Testis (tissue), 5 donors: ENCODE measurements at regions of chr15 and their contacts with region 1.

Region 1: DNA sequence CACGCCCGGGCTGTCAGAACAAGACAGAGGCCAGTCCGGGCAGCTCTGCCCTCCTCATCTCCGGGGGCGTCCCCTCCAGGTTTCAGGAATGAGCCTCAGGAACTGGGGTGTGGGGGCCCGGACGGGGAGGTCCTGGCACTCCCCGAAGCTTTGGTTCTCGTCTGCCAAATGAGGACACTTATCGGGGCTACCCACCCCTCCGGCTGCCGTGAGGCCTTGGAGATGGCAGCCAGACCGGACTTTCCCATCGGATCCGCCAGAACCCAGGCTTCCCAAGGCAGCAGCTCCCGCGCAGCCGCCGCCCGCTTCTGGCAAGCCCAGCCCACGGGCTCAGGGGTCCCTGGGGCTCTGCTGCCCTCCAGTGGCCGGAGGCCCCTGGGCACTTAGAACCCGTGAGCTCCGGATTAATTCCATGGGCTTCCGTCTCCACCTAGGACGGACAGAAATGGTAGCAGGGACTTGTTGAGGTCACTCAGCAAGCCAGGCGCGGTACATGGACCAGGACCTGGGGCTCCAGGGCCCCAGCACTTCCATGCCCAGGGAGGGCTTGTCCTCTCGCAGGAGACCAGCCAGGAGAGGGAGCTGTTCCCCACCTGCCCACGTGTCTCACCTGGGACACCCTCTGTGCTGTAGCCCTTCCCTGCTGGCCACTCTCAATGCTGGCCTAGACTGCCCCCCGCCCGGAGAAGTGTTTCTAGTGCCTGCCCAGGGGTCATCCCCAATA is 89.4 kb downstream of the LINGO1 start:
- DNase-seq: peak; percentile 89
- H3K4me3 ChIP-seq: peak overlapping the region; percentile 10 to 30
- H3K27ac ChIP-seq: peak overlapping the region in 1 of 2 donors; percentile 82
- H3K4me1 ChIP-seq: peaks cover 27% of the 10 kb centered on the region
- H3K27me3 ChIP-seq: no peaks in the 10 kb centered on the region
- CTCF ChIP-seq: peak; percentile 90 to 94 (median 93)
- POLR2A ChIP-seq: no peak

Region 2: GRCh38 chr15:77118882-77119321 is 424.4 kb before region 1 on chr15:
- intact Hi-C with region 1: loop called (anchors 10 kb)
- DNase-seq: peak; percentile 67
- H3K4me3 ChIP-seq: no peak overlapping the region
- H3K27ac ChIP-seq: no peak overlapping the region
- H3K4me1 ChIP-seq: no peaks in the 10 kb centered on the region
- H3K27me3 ChIP-seq: no peaks in the 10 kb centered on the region
- CTCF ChIP-seq: peak; percentile 51 to 68 (median 64)
- POLR2A ChIP-seq: no peak

Region 3: GRCh38 chr15:77402740-77403379 is 140.5 kb before region 1 on chr15:
- intact Hi-C with region 1: no loop called
- DNase-seq: no peak
- H3K4me3 ChIP-seq: no peak overlapping the region
- H3K27ac ChIP-seq: no peak overlapping the region
- H3K4me1 ChIP-seq: no peaks in the 10 kb centered on the region
- H3K27me3 ChIP-seq: no peaks in the 10 kb centered on the region
- CTCF ChIP-seq: no peak
- POLR2A ChIP-seq: no peak